Motor neuron (in vitro differentiated cells): ENCODE measurements at regions of chr14 and their contacts with region 1.

Region 1: GRCh38 chr14:34098045-34098984 is 147.4 kb upstream of the EGLN3 start:
- ATAC-seq: peak; percentile 25 to 81 (median 64)
- H3K4me3 ChIP-seq: no peak overlapping the region
- H3K27ac ChIP-seq: peak overlapping the region in 1 of 2 donors; percentile 19
- H3K4me1 ChIP-seq: peaks cover 18 to 24% of the 10 kb centered on the region in 2 donors

Region 2: DNA sequence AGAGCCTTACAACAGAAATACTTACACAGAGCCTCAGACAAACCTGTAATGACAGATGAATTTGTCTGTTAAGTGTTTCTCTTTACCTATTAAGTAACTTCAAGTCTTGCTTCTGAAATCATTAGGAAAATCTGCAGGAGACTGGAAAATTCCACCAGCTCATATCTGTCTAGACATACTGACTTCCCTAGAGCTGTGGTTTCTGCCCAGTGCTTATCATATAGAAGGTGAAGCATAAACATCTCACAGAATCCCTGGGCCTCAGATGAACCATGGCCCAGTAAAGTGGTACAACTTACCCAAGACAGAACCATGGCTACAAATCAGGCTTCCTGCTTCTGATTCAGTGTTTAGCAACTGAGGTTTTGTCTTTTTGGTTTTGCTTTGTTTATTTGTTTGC is 239.0 kb before region 1 on chr14:
- in situ Hi-C with region 1: loop called in 1 of 9 experiments (anchors 25 kb)
- ATAC-seq: no peak
- H3K4me3 ChIP-seq: no peak overlapping the region
- H3K27ac ChIP-seq: no peak overlapping the region
- H3K4me1 ChIP-seq: no peaks in the 10 kb centered on the region